HepG2 (cell line): ENCODE measurements at regions of chr2 and their contacts with region 1.

Region 1: DNA sequence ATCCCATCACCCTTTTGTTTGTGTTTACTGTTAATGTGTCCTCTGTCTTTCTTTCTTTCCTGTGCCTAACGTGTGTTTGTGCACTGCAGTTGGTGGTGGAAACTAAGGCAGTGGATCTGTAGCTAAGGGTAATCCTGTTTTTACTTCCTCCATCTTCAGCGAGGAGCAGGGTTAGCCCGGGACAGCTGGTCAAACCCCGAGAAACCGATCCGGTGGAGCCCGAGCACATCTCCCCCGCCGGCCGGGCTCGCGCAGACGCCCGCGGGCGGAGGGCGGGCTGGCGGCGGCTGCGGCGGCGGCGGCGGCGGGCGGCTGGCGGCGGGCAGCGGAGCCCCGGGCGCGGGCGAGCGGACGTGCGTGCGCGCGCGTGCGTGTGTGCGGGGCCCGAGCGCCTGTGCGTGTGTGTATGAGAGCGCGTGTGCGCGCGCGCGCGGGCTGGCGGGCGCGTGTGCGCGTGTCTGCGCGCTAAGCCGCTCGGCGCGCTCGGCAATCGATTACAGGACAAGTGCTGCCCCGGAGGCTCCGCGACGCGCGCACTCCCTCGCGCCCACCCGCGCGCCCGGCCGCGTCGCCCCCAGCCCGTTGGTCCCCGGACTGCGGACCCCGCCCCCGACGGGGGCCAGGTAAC is at the start of gene IKZF2:
- DNase-seq: peak; percentile 71
- ATAC-seq: peak; percentile 89
- H3K4me3 ChIP-seq: peak within 1 kb of the TSS; percentile 72 to 83 (median 80)
- H3K27ac ChIP-seq: no peak within 1 kb of the TSS
- H3K4me1 ChIP-seq: peaks cover 11% of the 10 kb centered on the region; the same call in 1 of the 2 replicates
- H3K27me3 ChIP-seq: peaks cover 0 to 15% of the 10 kb centered on the region in 2 experiments; a peak in 1 of 5 replicates
- CTCF ChIP-seq: no peak
- EP300 ChIP-seq: no peak
- POLR2A ChIP-seq: peak in 1 of 2 experiments; percentile 29; a peak in 1 of 4 replicates
- RAD21 ChIP-seq: peak; percentile 77
- total RNA-seq, gene IKZF2: 0.60 and 0.86 TPM in 2 replicates

Region 2: GRCh38 chr2:212777020-212777491 is 374.5 kb before region 1 on chr2:
- CTCF ChIA-PET with region 1: interaction called, 18 read pairs
- POLR2A ChIA-PET with region 1: no interaction called
- in situ Hi-C with region 1: loop called (anchors 10 kb)
- intact Hi-C with region 1: no loop called
- DNase-seq: peak; percentile 6
- ATAC-seq: peak; percentile 41; the same call in 2 of the 3 replicates
- H3K4me3 ChIP-seq: no peak overlapping the region
- H3K27ac ChIP-seq: no peak overlapping the region
- H3K4me1 ChIP-seq: no peaks in the 10 kb centered on the region
- H3K27me3 ChIP-seq: no peaks in the 10 kb centered on the region
- CTCF ChIP-seq: peak; percentile 49
- EP300 ChIP-seq: no peak
- POLR2A ChIP-seq: no peak
- RAD21 ChIP-seq: no peak

Region 3: GRCh38 chr2:212892193-212892592 is 259.4 kb before region 1 on chr2:
- CTCF ChIA-PET with region 1: no interaction called
- POLR2A ChIA-PET with region 1: no interaction called
- in situ Hi-C with region 1: no loop called
- intact Hi-C with region 1: loop called (anchors 2 kb)
- DNase-seq: peak; percentile 46
- ATAC-seq: peak; percentile 80
- H3K4me3 ChIP-seq: no peak overlapping the region
- H3K27ac ChIP-seq: no peak overlapping the region
- H3K4me1 ChIP-seq: no peaks in the 10 kb centered on the region
- H3K27me3 ChIP-seq: no peaks in the 10 kb centered on the region
- CTCF ChIP-seq: peak; percentile 55
- EP300 ChIP-seq: no peak
- POLR2A ChIP-seq: no peak
- RAD21 ChIP-seq: no peak

Region 4: DNA sequence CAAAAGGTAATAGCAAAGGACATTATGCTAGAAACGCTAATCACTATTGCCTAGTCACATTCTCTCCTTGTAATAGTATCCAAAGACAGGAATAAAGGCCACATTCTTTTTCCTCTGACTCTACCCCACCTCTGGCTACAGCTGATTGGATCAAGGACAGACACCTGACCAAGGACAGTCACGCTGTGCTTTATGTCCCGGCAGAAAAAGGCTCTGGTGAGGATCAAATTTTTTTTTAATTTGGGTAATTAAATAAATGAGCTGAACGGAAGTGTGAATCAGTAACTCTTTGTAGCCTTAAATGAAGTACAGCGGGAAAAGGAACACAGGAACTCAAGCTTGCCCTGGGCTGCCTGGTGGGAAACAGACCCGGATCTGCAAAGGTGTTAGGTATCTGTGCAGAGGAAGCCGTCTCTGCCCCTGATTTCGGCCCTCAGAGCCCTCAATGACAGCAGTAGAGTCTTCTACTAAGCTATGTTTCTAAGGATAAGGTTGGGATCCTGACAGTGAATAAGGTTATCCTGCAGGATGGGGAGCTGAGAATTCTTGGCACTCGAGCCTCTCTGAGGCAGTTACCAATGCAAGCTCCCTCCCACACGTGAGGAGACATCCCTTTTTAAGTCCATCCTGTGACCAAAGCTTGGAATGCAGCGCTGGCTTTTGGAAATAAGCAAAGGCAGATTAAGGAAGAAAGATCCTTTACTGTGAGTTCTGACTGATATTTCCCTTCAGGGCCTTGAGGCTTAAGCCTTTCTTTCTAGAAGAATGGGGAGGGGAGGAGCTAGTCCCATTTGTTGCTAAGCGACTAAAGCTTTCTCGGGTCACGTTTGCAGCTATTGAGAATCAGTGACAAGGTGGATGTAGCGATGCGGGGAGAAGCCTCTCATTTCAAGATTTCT is 37.7 kb after region 1 on chr2:
- CTCF ChIA-PET with region 1: no interaction called
- POLR2A ChIA-PET with region 1: no interaction called
- in situ Hi-C with region 1: no loop called
- intact Hi-C with region 1: loop called (anchors 2 kb)
- DNase-seq: peak; percentile 6
- ATAC-seq: peak; percentile 46
- H3K4me3 ChIP-seq: no peak overlapping the region; a peak in 1 of 6 replicates
- H3K27ac ChIP-seq: no peak overlapping the region
- H3K4me1 ChIP-seq: peaks cover 25% of the 10 kb centered on the region
- H3K27me3 ChIP-seq: no peaks in the 10 kb centered on the region
- CTCF ChIP-seq: no peak
- EP300 ChIP-seq: no peak
- POLR2A ChIP-seq: no peak
- RAD21 ChIP-seq: no peak

Region 5: GRCh38 chr2:213227458-213227857 is 75.9 kb after region 1 on chr2:
- CTCF ChIA-PET with region 1: no interaction called
- POLR2A ChIA-PET with region 1: no interaction called
- in situ Hi-C with region 1: no loop called
- intact Hi-C with region 1: no loop called
- DNase-seq: no peak
- ATAC-seq: no peak
- H3K4me3 ChIP-seq: no peak overlapping the region
- H3K27ac ChIP-seq: no peak overlapping the region
- H3K4me1 ChIP-seq: no peaks in the 10 kb centered on the region
- H3K27me3 ChIP-seq: 0 out of 5 replicates have a peak, but pooled peaks cover 0 to 5% of the 10 kb centered on the region in 2 experiments
- CTCF ChIP-seq: no peak
- EP300 ChIP-seq: no peak
- POLR2A ChIP-seq: no peak
- RAD21 ChIP-seq: no peak

Region 6: GRCh38 chr2:213284105-213285090 is 132.8 kb after region 1 on chr2 and contains the start of gene SPAG16:
- CTCF ChIA-PET with region 1: no interaction called
- POLR2A ChIA-PET with region 1: interaction called, 3 read pairs
- in situ Hi-C with region 1: no loop called
- intact Hi-C with region 1: loop called (anchors 1 kb)
- DNase-seq: peak; percentile 99
- ATAC-seq: peak; percentile 99
- H3K4me3 ChIP-seq: peak within 1 kb of the TSS; percentile 76 to 87 (median 83)
- H3K27ac ChIP-seq: peak within 1 kb of the TSS; percentile 68
- H3K4me1 ChIP-seq: peaks cover 31% of the 10 kb centered on the region
- H3K27me3 ChIP-seq: no peaks in the 10 kb centered on the region; a peak in 1 of 5 replicates
- CTCF ChIP-seq: no peak; the same call in 1 of the 2 replicates
- EP300 ChIP-seq: peak; percentile 37 to 50; a peak in 2 of 4 replicates
- POLR2A ChIP-seq: peak; percentile 82 to 89
- RAD21 ChIP-seq: peak; percentile 57; the same call in 1 of the 2 replicates
- total RNA-seq, gene SPAG16: 22.3 and 26.5 TPM in 2 replicates